Activated CD8-positive, alpha-beta T cell treated with anti-CD3 and anti-CD28 coated beads for 36 hours (primary cell): ENCODE measurements at regions of chr2 and their contacts with region 1.

Region 1: DNA sequence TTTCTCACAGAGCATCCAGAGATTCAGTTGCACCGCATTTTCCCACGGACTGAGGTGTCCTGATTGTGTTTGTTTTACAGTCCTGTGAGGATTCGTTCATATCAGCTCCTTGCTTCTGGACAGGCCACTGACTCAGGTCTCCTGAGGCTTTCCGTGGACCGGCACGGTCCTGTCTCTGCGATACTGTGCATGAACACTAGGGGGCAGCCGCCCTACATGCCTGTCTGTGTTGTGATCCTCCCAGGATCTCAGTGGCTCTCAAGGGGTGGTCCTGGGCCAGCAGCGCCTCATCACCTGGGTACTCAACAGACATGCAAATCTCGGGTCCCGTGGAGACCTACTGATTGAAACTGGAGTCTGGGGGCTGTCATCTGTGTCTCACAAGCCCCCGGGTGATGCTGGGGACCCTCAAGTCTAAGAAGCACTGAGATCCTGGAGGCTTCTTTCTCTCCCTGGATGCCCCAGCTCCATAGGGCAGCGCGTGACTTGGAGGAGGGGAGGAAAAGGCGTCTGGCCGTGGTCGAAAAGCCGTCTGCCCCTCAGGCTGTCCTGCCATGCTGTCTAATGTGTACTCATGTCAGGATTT is 28.9 kb downstream of the IL1R2 start:
- DNase-seq: peak; percentile 90
- ATAC-seq: peak; percentile 100
- H3K4me3 Mint-ChIP-seq: no peak overlapping the region
- H3K27ac Mint-ChIP-seq: no peak overlapping the region
- H3K4me1 Mint-ChIP-seq: peaks cover 9% of the 10 kb centered on the region
- H3K27me3 Mint-ChIP-seq: peaks cover 4% of the 10 kb centered on the region
- CTCF ChIP-seq: peak; percentile 99

Region 2: DNA sequence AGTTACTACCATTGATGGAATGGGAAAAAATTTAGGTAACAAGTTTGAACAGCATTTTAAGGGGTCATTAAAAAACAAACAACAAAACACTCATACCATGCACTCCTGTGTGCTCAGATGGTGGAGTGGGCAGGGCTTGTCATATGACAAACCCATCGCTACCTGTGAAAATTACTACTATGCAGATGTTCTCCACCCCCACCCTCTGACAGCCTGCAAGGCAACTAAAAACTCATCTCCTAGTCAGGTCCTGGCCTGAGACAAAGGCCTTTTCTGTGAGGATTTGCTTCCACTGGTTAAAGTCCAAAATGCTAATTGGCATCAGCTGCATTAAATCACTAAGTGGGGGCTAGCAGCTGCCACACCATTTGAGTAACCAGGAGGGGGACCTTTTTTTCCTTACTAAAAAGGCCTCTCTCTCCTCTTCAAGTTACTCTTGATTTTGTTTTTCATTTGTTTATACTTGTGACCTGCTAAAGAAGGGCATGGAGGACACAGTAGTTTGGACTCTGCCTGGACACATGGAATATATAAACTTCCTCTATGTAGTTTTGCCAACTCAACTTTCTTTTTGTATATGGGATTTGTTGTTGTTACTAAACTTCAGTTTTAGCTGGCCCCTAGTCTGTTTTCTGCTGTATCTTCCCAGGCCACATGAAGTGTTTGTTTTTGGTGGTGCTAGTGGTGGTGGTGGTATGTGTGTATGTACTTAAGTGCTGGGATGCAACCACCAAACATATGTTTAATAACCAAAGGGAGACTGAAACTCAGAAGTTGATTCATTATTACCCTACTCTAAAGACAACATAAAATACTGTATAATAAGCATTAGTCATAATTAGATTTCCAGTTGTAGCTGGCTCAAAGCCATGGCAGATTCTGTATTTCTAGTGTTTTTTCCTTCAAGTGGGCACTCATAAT is 201.9 kb before region 1 on chr2:
- CTCF ChIA-PET with region 1: no interaction called
- POLR2A ChIA-PET with region 1: no interaction called
- intact Hi-C with region 1: no loop called
- DNase-seq: peak; percentile 27
- ATAC-seq: no peak
- H3K4me3 Mint-ChIP-seq: no peak overlapping the region
- H3K27ac Mint-ChIP-seq: peak overlapping the region; percentile 36
- H3K4me1 Mint-ChIP-seq: peaks cover 77% of the 10 kb centered on the region
- H3K27me3 Mint-ChIP-seq: no peaks in the 10 kb centered on the region
- CTCF ChIP-seq: no peak

Region 3: GRCh38 chr2:101998896-101999789 is 21.5 kb before region 1 on chr2:
- CTCF ChIA-PET with region 1: interaction called, 24 read pairs
- POLR2A ChIA-PET with region 1: no interaction called
- intact Hi-C with region 1: no loop called
- DNase-seq: peak; percentile 41
- ATAC-seq: peak; percentile 66
- H3K4me3 Mint-ChIP-seq: peak overlapping the region; percentile 8
- H3K27ac Mint-ChIP-seq: peak overlapping the region; percentile 67
- H3K4me1 Mint-ChIP-seq: peaks cover 25% of the 10 kb centered on the region
- H3K27me3 Mint-ChIP-seq: no peaks in the 10 kb centered on the region
- CTCF ChIP-seq: no peak

Region 4: DNA sequence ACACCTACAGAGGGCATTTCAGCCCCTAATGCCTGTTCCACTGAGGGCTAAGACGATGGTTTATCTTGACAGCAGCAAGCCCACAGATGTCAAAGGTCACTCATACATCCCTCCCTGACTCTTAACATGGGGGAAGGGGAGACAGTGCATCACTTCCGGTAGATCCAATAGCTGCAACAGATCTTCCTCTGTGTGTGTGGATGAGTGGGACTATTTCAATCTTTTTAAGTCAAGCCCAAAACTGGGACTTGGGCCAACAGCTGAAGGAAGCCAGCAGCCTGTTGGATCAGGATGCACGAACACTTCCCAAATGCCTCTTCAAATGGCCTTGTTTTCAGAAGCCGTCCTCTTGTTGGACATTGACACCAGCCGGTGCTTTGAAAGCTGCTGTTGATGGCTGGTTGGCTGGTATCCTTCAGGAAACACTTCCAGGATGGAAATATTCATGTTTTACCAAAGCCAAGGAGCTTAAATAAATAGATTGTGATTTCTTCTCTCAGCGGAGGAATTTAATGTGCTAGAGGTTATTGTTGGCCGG is 30.2 kb after region 1 on chr2:
- CTCF ChIA-PET with region 1: interaction called, 11 read pairs
- POLR2A ChIA-PET with region 1: no interaction called
- intact Hi-C with region 1: no loop called
- DNase-seq: no peak
- ATAC-seq: no peak
- H3K4me3 Mint-ChIP-seq: no peak overlapping the region
- H3K27ac Mint-ChIP-seq: no peak overlapping the region
- H3K4me1 Mint-ChIP-seq: peaks cover 2% of the 10 kb centered on the region
- H3K27me3 Mint-ChIP-seq: peaks cover 10% of the 10 kb centered on the region
- CTCF ChIP-seq: no peak

Region 5: GRCh38 chr2:102092535-102092934 is 71.8 kb after region 1 on chr2:
- CTCF ChIA-PET with region 1: interaction called, 10 read pairs
- POLR2A ChIA-PET with region 1: no interaction called
- intact Hi-C with region 1: no loop called
- DNase-seq: no peak
- ATAC-seq: no peak
- H3K4me3 Mint-ChIP-seq: no peak overlapping the region
- H3K27ac Mint-ChIP-seq: no peak overlapping the region
- H3K4me1 Mint-ChIP-seq: peaks cover 4% of the 10 kb centered on the region
- H3K27me3 Mint-ChIP-seq: peaks cover 1% of the 10 kb centered on the region
- CTCF ChIP-seq: no peak

Region 6: DNA sequence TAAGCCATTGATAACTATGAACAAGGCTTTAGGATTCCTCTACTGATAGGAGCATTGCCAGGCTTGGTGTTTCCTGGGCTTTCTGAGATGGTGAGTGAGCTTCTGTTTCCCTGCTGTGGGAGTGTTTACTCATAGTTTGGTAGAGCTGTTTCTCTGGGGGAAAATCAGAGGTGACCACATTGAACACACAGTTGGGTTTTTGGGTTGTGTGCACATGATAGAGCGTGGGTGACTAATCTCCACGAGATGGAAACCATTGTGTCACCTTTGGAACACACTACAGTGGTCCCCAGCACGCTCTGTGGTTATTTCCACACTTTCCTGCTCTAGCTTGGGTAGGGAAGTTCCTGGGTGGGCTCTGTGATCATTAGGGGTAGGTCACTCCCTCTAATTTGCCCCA is 127.2 kb after region 1 on chr2:
- CTCF ChIA-PET with region 1: interaction called, 12 read pairs
- POLR2A ChIA-PET with region 1: no interaction called
- intact Hi-C with region 1: no loop called
- DNase-seq: peak; percentile 78
- ATAC-seq: peak; percentile 85
- H3K4me3 Mint-ChIP-seq: no peak overlapping the region
- H3K27ac Mint-ChIP-seq: peak overlapping the region; percentile 80
- H3K4me1 Mint-ChIP-seq: peaks cover 23% of the 10 kb centered on the region
- H3K27me3 Mint-ChIP-seq: peaks cover 10% of the 10 kb centered on the region
- CTCF ChIP-seq: no peak

Region 7: DNA sequence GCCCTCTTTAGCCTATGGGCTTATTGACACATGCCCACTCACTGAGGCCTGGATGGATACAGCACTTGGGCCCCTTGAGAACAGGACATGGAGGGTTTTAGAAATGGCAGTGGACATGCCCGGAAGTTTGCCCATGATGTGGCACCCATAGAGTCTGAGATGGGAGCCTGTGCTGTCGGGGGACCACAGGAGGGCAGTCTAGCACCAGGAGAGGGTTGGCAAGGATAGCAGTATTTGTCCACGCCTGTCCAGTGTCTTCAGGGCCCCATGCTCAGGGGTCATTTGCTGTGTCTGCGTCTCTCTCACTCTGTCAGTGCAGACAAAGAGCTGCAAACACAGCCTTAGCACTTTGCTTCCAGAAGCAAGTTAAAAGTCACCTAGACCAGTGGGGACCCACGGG is 214.8 kb after region 1 on chr2:
- CTCF ChIA-PET with region 1: interaction called, 222 read pairs
- POLR2A ChIA-PET with region 1: interaction called, 3 read pairs
- intact Hi-C with region 1: loop called (anchors 2 kb)
- DNase-seq: peak; percentile 46
- ATAC-seq: no peak
- H3K4me3 Mint-ChIP-seq: no peak overlapping the region
- H3K27ac Mint-ChIP-seq: no peak overlapping the region
- H3K4me1 Mint-ChIP-seq: peaks cover 49% of the 10 kb centered on the region
- H3K27me3 Mint-ChIP-seq: no peaks in the 10 kb centered on the region
- CTCF ChIP-seq: peak; percentile 20

Region 8: DNA sequence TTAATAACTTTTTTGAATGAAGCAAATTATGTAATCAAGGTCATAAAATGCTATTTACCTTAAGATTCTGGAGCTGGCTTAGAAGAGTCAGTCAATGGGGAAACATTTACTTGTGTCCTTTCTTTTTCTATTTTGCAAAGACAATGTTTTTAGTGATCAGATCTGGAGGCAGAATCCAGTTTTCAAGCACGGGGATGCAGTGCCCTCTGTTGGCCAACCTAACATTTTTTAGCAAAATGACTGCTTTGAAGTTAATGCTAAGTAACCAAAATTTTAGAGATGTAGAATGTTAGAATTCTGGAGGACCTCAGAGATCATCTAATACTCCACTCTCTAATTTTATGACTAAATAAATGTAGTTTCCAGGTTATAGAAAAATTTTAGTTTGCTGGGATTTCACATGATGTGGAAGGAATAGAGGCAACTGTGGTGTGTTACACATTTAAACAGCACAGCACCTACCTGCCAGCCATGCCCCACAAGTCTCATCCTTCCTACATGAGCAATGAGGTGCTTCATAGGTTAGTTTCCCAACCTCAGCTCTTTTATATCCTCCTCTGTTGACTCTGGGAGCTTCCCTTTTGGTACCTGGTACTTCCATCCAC is 428.8 kb after region 1 on chr2:
- CTCF ChIA-PET with region 1: interaction called, 4 read pairs
- POLR2A ChIA-PET with region 1: no interaction called
- intact Hi-C with region 1: loop called (anchors 5 kb)
- DNase-seq: peak; percentile 75
- ATAC-seq: peak; percentile 47
- H3K4me3 Mint-ChIP-seq: no peak overlapping the region
- H3K27ac Mint-ChIP-seq: no peak overlapping the region
- H3K4me1 Mint-ChIP-seq: peaks cover 10% of the 10 kb centered on the region
- H3K27me3 Mint-ChIP-seq: no peaks in the 10 kb centered on the region
- CTCF ChIP-seq: peak; percentile 80